IMR-90 (cell line): ENCODE measurements at regions of chr12 and their contacts with region 1.

Region 1: DNA sequence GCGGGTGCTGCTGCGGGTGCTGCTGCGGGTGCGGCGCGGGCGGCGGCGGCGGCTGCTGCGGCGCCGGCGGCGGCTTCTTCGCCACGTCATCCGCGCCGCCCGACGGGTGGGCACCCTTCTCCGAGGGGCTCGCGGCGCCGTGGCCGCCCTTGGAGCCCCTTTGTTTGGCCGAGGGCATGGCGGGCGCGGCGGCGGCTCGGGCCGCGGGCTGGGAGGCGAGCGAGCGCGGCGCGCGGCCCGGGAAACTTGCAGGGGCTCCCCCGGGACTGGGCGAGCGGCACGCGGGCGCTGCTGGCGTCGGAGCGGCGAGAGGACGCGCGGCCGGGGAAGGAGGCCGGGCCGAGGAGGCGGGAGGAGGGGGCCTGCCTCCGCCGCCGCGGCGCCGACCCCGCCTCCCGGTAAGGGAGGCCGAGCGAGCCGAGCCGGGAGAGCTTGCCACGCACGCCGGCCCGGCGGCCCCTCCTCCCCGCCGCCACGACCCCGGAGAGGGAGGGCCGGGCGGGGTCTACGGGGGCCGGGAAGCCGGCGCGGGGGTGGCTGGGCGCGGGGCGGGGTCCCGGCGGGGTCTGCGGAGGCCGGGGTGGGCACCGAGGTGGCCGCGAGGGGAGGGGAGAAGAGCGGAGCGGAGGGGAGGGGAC is at the start of gene CKAP4:
- DNase-seq: peak; percentile 82
- ATAC-seq: peak; percentile 73
- H3K4me3 ChIP-seq: peak within 1 kb of the TSS; percentile 78
- H3K27ac ChIP-seq: peak within 1 kb of the TSS; percentile 97
- H3K4me1 ChIP-seq: peaks cover 17% of the 10 kb centered on the region
- H3K27me3 ChIP-seq: no peaks in the 10 kb centered on the region
- CTCF ChIP-seq: no peak
- POLR2A ChIP-seq: no peak; the same call in none of the 2 replicates
- RAD21 ChIP-seq: no peak
- total RNA-seq, gene CKAP4: 94.5 and 113 TPM in 2 replicates

Region 2: DNA sequence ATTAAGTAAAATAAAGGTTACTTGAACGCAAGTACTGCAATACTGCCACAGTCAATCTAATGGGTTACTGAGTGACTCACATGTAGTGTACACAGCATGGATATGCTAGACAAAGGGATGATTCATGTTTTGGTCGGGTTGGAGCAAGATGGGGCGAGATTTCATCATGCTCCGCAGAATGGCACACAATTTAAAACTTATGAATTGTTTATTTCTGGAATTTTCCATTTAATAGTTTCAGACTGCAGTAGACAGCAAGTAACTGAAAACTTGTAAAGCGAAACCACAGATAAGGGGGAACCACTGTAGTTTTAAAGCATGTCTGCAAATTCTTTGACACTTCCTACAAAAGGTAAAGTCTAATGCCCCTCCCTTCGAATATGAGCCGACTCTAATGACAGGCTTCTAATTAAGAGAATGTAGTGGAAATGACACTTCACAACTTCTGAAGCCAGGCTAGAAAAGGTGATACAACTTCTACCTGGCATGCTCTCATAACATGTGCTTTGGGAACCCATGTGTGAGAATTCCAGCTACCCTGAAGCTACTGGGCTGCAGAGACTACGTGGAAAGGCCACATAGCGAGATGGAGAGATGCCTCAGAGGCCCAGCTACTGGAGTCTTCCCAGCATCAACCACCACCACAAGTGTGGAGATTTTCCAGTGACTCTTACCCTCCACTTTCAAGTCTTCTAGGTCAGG is 40.9 kb after region 1 on chr12:
- CTCF ChIA-PET with region 1: no interaction called
- POLR2A ChIA-PET with region 1: no interaction called
- dilution Hi-C with region 1: no loop called
- in situ Hi-C with region 1: loop called (anchors 5 kb)
- intact Hi-C with region 1: loop called (anchors 5 kb)
- DNase-seq: peak; percentile 97
- ATAC-seq: peak; percentile 89
- H3K4me3 ChIP-seq: no peak overlapping the region
- H3K27ac ChIP-seq: peak overlapping the region; percentile 78
- H3K4me1 ChIP-seq: peaks cover 8% of the 10 kb centered on the region
- H3K27me3 ChIP-seq: no peaks in the 10 kb centered on the region
- CTCF ChIP-seq: no peak
- POLR2A ChIP-seq: no peak
- RAD21 ChIP-seq: no peak

Region 3: DNA sequence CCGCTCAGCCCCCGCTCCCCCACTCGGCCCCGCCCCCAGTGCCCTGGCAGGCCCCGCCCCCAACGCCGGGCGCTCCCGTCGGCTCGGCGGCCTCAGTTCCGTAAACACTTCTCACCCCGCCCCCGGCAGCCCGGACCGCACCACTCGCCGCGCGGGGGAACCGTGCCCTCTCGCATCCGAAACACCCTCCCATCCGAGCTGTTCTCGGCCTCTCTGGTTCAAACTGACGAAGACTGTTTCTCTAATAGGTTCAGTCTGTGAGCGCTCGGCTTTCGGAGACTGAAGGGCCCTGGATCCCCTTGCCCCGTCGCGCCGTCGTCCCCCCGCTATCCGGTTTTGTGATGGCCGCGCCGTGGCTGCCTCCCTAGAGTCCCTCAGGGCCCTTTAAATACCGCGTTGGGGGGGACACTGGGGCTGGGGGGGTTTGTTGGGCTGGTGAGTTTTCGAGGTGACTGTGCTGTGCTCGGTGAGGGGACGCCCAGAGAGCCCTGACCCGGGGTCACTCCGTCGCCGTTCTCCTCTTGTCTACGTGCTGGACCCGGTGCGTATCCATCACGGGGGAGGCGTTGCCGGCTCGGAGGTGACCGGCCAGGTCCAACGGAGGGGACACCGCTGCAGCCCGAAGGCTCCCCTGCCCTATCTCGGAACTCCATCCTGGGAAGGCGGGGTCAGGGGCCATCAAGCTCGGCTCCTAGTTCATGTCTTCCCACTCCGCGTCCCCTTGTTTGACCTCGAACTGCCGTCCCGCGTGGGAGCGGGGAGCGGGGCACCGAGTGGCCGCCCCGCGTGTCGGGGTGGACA is 54.8 kb after region 1 on chr12 and contains the start of gene TCP11L2:
- CTCF ChIA-PET with region 1: no interaction called
- POLR2A ChIA-PET with region 1: no interaction called
- dilution Hi-C with region 1: no loop called
- in situ Hi-C with region 1: no loop called
- intact Hi-C with region 1: loop called (anchors 2 kb)
- DNase-seq: peak; percentile 58
- ATAC-seq: peak; percentile 93
- H3K4me3 ChIP-seq: peak within 1 kb of the TSS; percentile 85
- H3K27ac ChIP-seq: peak within 1 kb of the TSS; percentile 98
- H3K4me1 ChIP-seq: peaks cover 9% of the 10 kb centered on the region
- H3K27me3 ChIP-seq: no peaks in the 10 kb centered on the region
- CTCF ChIP-seq: no peak
- POLR2A ChIP-seq: peak; percentile 72
- RAD21 ChIP-seq: no peak
- total RNA-seq, gene TCP11L2: 26.4 and 32.8 TPM in 2 replicates

Region 4: GRCh38 chr12:106342397-106343213 is 94.8 kb after region 1 on chr12:
- CTCF ChIA-PET with region 1: no interaction called
- POLR2A ChIA-PET with region 1: no interaction called
- dilution Hi-C with region 1: no loop called
- in situ Hi-C with region 1: no loop called
- intact Hi-C with region 1: loop called (anchors 5 kb)
- DNase-seq: peak; percentile 75
- ATAC-seq: peak; percentile 94
- H3K4me3 ChIP-seq: peak overlapping the region; percentile 15; the same call in 1 of the 2 replicates
- H3K27ac ChIP-seq: no peak overlapping the region
- H3K4me1 ChIP-seq: peaks cover 3% of the 10 kb centered on the region
- H3K27me3 ChIP-seq: no peaks in the 10 kb centered on the region
- CTCF ChIP-seq: no peak
- POLR2A ChIP-seq: no peak
- RAD21 ChIP-seq: no peak

Region 5: GRCh38 chr12:107254258-107254856 is 1006.6 kb after region 1 on chr12:
- CTCF ChIA-PET with region 1: no interaction called
- POLR2A ChIA-PET with region 1: no interaction called
- dilution Hi-C with region 1: no loop called
- in situ Hi-C with region 1: no loop called
- intact Hi-C with region 1: no loop called
- DNase-seq: no peak
- ATAC-seq: no peak
- H3K4me3 ChIP-seq: no peak overlapping the region
- H3K27ac ChIP-seq: no peak overlapping the region
- H3K4me1 ChIP-seq: no peaks in the 10 kb centered on the region
- H3K27me3 ChIP-seq: peaks cover 5% of the 10 kb centered on the region
- CTCF ChIP-seq: no peak
- POLR2A ChIP-seq: no peak
- RAD21 ChIP-seq: no peak